B cell (primary cell): ENCODE measurements at regions of chrX and their contacts with region 1.

Region 1: GRCh38 chrX:120468825-120469525 is at the start of gene LAMP2:
- DNase-seq: peak; percentile 87
- ATAC-seq: peak; percentile 96
- H3K4me3 ChIP-seq: peak within 1 kb of the TSS; percentile 62 to 88 (median 80)
- H3K4me3 Mint-ChIP-seq: peak within 1 kb of the TSS; percentile 85
- H3K27ac ChIP-seq: peak within 1 kb of the TSS; percentile 78 to 88
- H3K27ac Mint-ChIP-seq: peak within 1 kb of the TSS; percentile 92
- H3K4me1 ChIP-seq: peaks cover 7 to 11% of the 10 kb centered on the region in 2 donors
- H3K4me1 Mint-ChIP-seq: peaks cover 27% of the 10 kb centered on the region
- H3K27me3 ChIP-seq: no peaks in the 10 kb centered on the region
- H3K27me3 Mint-ChIP-seq: no peaks in the 10 kb centered on the region
- CTCF ChIP-seq: no peak
- total RNA-seq, gene LAMP2: 35.0 and 37.1 TPM in 2 replicates

Region 2: GRCh38 chrX:120485638-120486520 is 16.9 kb after region 1 on chrX:
- CTCF ChIA-PET with region 1: interaction called, 5 read pairs
- POLR2A ChIA-PET with region 1: interaction called, 4 read pairs
- intact Hi-C with region 1: loop called (anchors 1 kb)
- DNase-seq: peak; percentile 75
- ATAC-seq: peak; percentile 74
- H3K4me3 ChIP-seq: peak overlapping the region; percentile 19 to 86 (median 69)
- H3K4me3 Mint-ChIP-seq: peak overlapping the region; percentile 92
- H3K27ac ChIP-seq: peak overlapping the region; percentile 68 to 77
- H3K27ac Mint-ChIP-seq: peak overlapping the region; percentile 95
- H3K4me1 ChIP-seq: peaks cover 7% of the 10 kb centered on the region in 2 donors
- H3K4me1 Mint-ChIP-seq: peaks cover 13% of the 10 kb centered on the region
- H3K27me3 ChIP-seq: no peaks in the 10 kb centered on the region
- H3K27me3 Mint-ChIP-seq: no peaks in the 10 kb centered on the region
- CTCF ChIP-seq: peak; percentile 66

Region 3: DNA sequence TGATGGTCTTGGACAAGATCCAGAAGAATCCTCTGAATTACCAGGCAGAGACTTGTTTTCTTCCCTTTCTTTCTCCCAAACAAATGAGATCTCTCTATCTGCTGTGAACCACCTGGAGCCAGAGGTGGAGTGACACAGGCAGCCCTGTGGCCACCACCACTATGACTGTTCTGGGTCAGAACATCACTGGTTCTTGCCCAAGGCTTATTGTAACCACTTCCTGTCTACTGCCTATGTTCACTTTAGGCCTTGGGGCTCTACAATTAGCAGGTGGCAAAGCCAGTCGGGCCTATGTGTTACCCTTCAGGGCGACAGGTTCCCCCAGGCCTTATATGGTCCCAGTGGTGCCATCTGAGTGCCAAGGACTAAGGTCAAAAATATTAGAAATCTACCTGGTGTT is 739.6 kb after region 1 on chrX:
- CTCF ChIA-PET with region 1: no interaction called
- POLR2A ChIA-PET with region 1: no interaction called
- intact Hi-C with region 1: no loop called
- DNase-seq: no peak
- ATAC-seq: no peak
- H3K4me3 ChIP-seq: no peak overlapping the region
- H3K4me3 Mint-ChIP-seq: no peak overlapping the region
- H3K27ac ChIP-seq: no peak overlapping the region
- H3K27ac Mint-ChIP-seq: no peak overlapping the region
- H3K4me1 ChIP-seq: no peaks in the 10 kb centered on the region
- H3K4me1 Mint-ChIP-seq: no peaks in the 10 kb centered on the region
- H3K27me3 ChIP-seq: no peaks in the 10 kb centered on the region
- H3K27me3 Mint-ChIP-seq: no peaks in the 10 kb centered on the region
- CTCF ChIP-seq: no peak